ENCODE measurements at regions of chr9 and their contacts with region 1.

Region 1: DNA sequence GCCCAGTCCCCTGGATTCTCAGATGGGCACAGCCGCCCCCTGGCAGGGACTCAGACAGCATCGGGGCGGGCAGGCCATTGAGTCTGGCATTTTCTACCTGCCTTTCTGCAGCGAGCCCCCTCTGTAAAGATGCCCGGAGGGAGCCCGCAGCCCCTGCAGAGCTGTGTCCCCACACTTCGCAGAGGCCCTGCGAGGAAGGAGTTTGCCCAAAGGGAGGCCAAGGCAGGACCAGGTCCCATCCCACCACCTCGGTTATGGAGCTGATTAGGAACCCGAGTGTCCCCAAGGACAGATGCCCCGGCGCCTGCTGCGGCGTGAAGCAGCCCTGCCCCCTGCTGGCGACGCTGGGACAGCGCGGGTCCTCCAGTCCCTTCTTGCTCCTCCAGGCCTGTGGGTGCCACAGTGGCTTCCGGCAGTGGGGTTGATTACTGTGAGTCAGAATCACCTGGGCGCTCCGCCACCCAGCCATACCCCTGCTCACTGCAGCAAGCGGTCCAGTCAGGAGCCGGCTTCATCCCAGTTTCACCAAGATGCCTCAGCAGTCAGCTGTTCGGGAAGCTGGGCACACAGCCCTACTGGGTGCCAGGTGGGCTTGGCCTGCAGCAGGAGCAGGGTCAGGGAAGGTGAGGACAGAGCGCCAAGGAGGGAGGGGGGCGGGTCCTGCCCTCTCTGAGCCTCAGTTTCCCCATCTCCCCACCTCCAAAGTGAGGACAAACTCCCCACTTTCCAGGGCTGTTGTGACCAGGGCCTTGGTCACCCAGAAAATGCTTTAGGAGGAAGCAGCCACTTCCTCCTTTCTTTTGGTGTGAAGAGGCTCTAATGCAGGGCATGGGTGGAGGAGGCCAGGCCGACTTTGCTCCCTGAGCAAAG is 117.1 kb downstream of the RXRA start:
- DNase-seq: peak; percentile 95
- H3K4me3 Mint-ChIP-seq: no peak overlapping the region
- H3K27ac Mint-ChIP-seq: no peak overlapping the region
- H3K4me1 Mint-ChIP-seq: peaks cover 12% of the 10 kb centered on the region
- H3K27me3 Mint-ChIP-seq: no peaks in the 10 kb centered on the region
- CTCF ChIP-seq: peak; percentile 97

Region 2: DNA sequence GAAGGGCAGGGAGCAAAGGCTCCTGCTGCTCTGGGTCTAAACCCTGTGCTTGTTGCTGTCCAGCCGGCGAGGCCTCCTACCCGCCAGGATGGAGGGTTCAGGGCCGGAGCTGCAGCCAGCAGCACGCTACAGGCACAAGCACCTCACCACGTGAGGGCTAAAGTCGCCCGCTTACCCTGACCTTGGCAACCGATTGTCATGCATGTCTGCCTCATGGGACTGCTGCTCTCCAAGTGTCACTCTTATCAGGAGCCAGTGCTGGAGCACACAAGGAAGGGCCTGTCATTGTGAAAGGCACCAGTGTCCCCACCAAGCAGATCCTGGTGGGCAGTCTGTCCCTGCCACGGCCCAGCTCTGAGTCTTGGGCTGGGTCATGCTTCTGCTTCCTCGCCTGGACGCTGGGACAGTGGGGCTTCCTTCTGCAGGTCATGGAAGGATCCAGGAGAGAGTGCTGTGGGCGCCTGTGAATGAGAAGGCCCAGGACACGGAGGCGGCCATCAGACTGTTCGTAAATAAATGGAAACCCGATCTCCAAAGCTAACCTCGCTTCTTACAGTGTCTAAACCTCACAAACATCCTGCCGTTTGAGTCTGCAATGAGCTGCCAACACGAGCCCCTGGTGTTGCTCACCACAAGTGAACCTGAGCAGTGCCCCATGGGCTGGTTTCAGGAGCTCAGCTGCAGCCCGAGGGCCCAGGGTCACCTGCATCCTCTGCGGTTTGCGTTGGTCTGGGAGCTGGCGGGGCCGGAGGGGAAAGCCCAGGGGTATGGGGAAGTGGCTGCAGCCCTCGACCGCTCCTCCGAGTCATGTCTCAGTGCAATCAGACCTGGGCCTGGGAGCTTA is 175.3 kb before region 1 on chr9:
- CTCF ChIA-PET with region 1: no interaction called
- POLR2A ChIA-PET with region 1: no interaction called
- intact Hi-C with region 1: no loop called
- DNase-seq: no peak
- H3K4me3 Mint-ChIP-seq: no peak overlapping the region
- H3K27ac Mint-ChIP-seq: no peak overlapping the region
- H3K4me1 Mint-ChIP-seq: no peaks in the 10 kb centered on the region
- H3K27me3 Mint-ChIP-seq: peaks cover 55% of the 10 kb centered on the region
- CTCF ChIP-seq: no peak

Region 3: GRCh38 chr9:134283111-134283515 is 160.3 kb before region 1 on chr9:
- CTCF ChIA-PET with region 1: no interaction called
- POLR2A ChIA-PET with region 1: no interaction called
- intact Hi-C with region 1: loop called (anchors 5 kb)
- DNase-seq: peak; percentile 97
- H3K4me3 Mint-ChIP-seq: peak overlapping the region; percentile 36
- H3K27ac Mint-ChIP-seq: no peak overlapping the region
- H3K4me1 Mint-ChIP-seq: peaks cover 23% of the 10 kb centered on the region
- H3K27me3 Mint-ChIP-seq: no peaks in the 10 kb centered on the region
- CTCF ChIP-seq: no peak

Region 4: GRCh38 chr9:134585746-134586706 is 142.6 kb after region 1 on chr9:
- CTCF ChIA-PET with region 1: no interaction called
- POLR2A ChIA-PET with region 1: no interaction called
- intact Hi-C with region 1: no loop called
- DNase-seq: peak; percentile 45
- H3K4me3 Mint-ChIP-seq: no peak overlapping the region
- H3K27ac Mint-ChIP-seq: no peak overlapping the region
- H3K4me1 Mint-ChIP-seq: peaks cover 5% of the 10 kb centered on the region
- H3K27me3 Mint-ChIP-seq: peaks cover 15% of the 10 kb centered on the region
- CTCF ChIP-seq: no peak

Measured in MCF 10A (cell line).